PC-3 (cell line): ENCODE measurements at regions of chr7 and their contacts with region 1.

Region 1: GRCh38 chr7:105876091-105876963 is at the start of gene ATXN7L1:
- DNase-seq: peak; percentile 99
- ATAC-seq: peak; percentile 77
- H3K4me3 ChIP-seq: peak within 1 kb of the TSS; percentile 90
- H3K27ac ChIP-seq: peak within 1 kb of the TSS; percentile 62
- H3K4me1 ChIP-seq: peaks cover 32% of the 10 kb centered on the region
- H3K27me3 ChIP-seq: no peaks in the 10 kb centered on the region
- CTCF ChIP-seq: 0 out of 2 replicates have a peak, but pooled peaks have one; percentile 23
- total RNA-seq, gene ATXN7L1: 6.2 and 16.0 TPM in 2 replicates

Region 2: DNA sequence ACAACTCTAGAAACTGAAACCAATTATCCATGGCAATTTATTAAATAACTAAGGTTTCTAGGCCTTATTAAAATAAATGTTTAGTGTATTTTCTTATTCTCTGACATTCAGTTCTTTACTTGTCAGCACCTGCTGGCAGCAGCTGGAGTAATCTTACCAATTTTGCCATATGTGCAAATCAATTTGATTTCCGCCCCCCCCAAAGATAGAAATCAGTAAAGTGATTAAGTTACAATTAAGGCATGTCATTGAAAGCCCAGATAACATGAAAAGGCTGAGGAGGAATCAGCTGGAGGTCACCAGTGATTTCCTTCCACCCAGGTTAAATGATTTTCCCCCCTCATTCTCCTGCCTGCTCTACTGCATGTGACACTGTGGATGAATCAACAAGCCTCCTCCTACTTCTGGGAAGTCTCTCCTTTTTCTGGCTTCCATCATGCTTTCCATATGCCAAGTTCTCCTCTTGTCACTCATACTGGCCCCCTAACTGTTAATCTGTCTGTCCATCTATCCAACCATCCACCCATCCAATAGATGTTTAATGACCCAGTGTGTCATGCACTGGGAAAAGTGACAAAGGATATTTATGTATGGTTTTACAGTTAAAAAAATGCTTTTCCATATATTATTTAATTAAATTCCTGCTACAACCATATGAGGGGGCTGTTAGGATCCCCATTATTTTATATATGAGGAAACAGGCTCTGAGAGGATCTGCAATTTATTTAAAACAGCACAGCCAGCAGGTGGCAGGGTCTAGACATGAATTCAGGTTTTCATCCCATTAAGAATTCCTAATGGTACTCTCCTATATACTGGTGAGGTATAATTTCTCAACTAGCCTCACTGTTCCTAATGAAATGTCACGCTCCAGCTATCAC is 116.4 kb before region 1 on chr7:
- CTCF ChIA-PET with region 1: interaction called, 15 read pairs
- POLR2A ChIA-PET with region 1: no interaction called
- intact Hi-C with region 1: loop called (anchors 1 kb)
- DNase-seq: peak; percentile 85
- ATAC-seq: peak; percentile 80
- H3K4me3 ChIP-seq: no peak overlapping the region
- H3K27ac ChIP-seq: no peak overlapping the region
- H3K4me1 ChIP-seq: no peaks in the 10 kb centered on the region; the same call in 1 of the 2 replicates
- H3K27me3 ChIP-seq: no peaks in the 10 kb centered on the region
- CTCF ChIP-seq: peak; percentile 97

Region 3: GRCh38 chr7:105776058-105776751 is 100.1 kb before region 1 on chr7:
- CTCF ChIA-PET with region 1: no interaction called
- POLR2A ChIA-PET with region 1: no interaction called
- intact Hi-C with region 1: loop called (anchors 2 kb)
- DNase-seq: peak; percentile 99
- ATAC-seq: peak; percentile 91
- H3K4me3 ChIP-seq: peak overlapping the region; percentile 1; the same call in 1 of the 2 replicates
- H3K27ac ChIP-seq: peak overlapping the region; percentile 80
- H3K4me1 ChIP-seq: peaks cover 32% of the 10 kb centered on the region
- H3K27me3 ChIP-seq: no peaks in the 10 kb centered on the region
- CTCF ChIP-seq: no peak

Region 4: DNA sequence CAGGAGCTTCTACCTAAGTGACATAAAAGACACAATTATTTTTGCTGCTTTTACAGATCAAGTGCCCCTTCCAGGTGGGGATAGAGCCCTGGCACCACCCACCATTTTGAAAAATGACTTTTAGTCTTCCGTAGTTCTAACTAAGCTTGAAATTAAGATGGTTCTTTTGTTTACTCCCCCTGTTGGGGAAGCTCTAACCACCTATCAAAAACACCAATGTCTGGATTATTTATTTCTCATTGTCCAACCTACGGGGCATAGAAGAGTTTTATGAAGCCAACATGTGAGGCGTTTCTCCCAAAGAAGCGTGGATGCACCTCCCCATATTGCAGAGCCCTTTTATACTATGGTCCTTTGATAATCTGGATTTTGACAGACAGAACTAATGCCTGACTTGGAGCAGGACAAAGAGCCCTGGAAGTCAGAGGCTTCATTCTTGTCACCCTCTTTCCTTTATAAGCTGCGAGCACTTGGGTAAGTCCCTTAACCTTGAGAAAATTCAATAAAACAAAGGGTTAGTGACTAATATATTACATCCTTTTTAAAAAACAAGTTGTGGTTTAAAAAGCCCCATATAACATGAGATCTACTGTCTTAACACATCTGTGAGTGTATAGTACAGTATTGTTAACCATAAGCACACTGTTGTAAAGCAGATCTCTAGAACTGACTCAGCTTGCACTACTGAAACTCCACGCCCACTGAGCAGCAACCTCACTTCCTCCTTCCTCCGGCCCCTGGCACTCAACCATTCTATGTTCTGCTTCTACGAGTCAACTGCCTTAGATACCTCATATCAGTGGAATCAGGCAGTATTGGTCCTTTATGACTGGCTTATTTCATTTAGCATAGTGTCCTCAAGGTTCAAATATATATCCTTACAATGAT is 67.4 kb before region 1 on chr7:
- CTCF ChIA-PET with region 1: interaction called, 3 read pairs
- POLR2A ChIA-PET with region 1: no interaction called
- intact Hi-C with region 1: loop called (anchors 1 kb)
- DNase-seq: peak; percentile 85
- ATAC-seq: peak; percentile 89
- H3K4me3 ChIP-seq: no peak overlapping the region
- H3K27ac ChIP-seq: peak overlapping the region; percentile 83
- H3K4me1 ChIP-seq: peaks cover 33% of the 10 kb centered on the region
- H3K27me3 ChIP-seq: no peaks in the 10 kb centered on the region
- CTCF ChIP-seq: 0 out of 2 replicates have a peak, but pooled peaks have one; percentile 10

Region 5: GRCh38 chr7:105896407-105896911 is 20.1 kb after region 1 on chr7:
- CTCF ChIA-PET with region 1: interaction called, 7 read pairs
- POLR2A ChIA-PET with region 1: interaction called, 8 read pairs
- intact Hi-C with region 1: loop called (anchors 1 kb)
- DNase-seq: peak; percentile 38
- ATAC-seq: peak; percentile 98
- H3K4me3 ChIP-seq: no peak overlapping the region
- H3K27ac ChIP-seq: no peak overlapping the region
- H3K4me1 ChIP-seq: 0 out of 2 replicates have a peak, but pooled peaks cover 4% of the 10 kb centered on the region
- H3K27me3 ChIP-seq: no peaks in the 10 kb centered on the region
- CTCF ChIP-seq: no peak

Region 6: GRCh38 chr7:106041140-106041717 is 164.9 kb after region 1 on chr7:
- CTCF ChIA-PET with region 1: no interaction called
- POLR2A ChIA-PET with region 1: no interaction called
- intact Hi-C with region 1: loop called (anchors 2 kb)
- DNase-seq: peak; percentile 79
- ATAC-seq: peak; percentile 66
- H3K4me3 ChIP-seq: no peak overlapping the region
- H3K27ac ChIP-seq: no peak overlapping the region
- H3K4me1 ChIP-seq: peaks cover 5% of the 10 kb centered on the region
- H3K27me3 ChIP-seq: no peaks in the 10 kb centered on the region
- CTCF ChIP-seq: peak; percentile 97